Mammary epithelial cell (primary cell): ENCODE measurements at regions of chr12 and their contacts with region 1.

Region 1: DNA sequence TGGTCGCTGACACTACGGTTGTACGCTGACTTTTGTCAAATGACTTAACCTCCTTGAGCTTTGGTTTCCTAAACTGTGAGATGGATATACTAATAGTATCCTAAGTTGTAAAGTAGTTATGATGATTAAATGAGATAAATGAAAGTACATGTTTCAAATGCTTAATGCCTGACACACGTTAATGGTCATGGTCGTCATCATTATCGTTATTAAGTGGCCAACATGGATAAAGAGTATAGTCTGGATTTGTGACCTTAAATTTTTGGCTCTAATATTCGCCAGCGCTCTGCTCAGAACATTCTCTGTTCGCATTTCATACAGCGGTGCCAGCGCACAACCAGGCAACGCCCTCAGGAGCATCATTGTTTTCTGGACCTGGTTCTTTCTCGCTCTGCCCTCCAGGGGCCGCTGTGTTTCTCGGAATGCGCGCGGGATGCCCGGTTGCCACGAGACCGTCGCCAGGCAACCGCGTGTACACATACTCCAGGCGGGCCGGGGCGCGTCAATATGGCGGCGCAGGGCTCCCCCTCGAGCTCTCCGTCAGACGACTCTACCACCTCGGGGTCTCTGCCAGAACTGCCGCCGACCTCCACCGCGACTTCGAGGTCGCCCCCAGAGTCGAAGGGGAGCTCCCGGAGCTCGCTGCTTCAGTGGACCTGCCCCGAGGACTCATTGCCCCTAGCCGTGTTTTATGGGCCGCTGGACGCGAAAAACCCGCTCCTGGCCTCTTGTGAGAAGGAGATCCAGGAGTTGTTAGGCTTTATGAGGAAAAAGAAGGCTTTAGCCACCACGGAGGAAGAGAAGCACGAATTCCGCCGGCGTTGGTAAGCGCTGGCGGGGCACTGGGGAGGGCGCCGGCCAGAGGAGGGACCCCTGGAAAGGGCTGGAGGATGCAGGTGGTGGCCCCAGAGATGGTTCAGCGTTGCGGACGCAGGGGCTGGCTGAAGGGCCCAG is at the start of gene CFAP54:
- DNase-seq: peak; percentile 92
- H3K4me3 ChIP-seq: peak within 1 kb of the TSS; percentile 59 to 72 (median 63)
- H3K27ac ChIP-seq: peak within 1 kb of the TSS; percentile 91
- H3K4me1 ChIP-seq: peaks cover 38% of the 10 kb centered on the region
- H3K27me3 ChIP-seq: no peaks in the 10 kb centered on the region
- CTCF ChIP-seq: peak; percentile 73 to 89
- total RNA-seq, gene CFAP54: 1.5 to 1.6 TPM

Region 2: DNA sequence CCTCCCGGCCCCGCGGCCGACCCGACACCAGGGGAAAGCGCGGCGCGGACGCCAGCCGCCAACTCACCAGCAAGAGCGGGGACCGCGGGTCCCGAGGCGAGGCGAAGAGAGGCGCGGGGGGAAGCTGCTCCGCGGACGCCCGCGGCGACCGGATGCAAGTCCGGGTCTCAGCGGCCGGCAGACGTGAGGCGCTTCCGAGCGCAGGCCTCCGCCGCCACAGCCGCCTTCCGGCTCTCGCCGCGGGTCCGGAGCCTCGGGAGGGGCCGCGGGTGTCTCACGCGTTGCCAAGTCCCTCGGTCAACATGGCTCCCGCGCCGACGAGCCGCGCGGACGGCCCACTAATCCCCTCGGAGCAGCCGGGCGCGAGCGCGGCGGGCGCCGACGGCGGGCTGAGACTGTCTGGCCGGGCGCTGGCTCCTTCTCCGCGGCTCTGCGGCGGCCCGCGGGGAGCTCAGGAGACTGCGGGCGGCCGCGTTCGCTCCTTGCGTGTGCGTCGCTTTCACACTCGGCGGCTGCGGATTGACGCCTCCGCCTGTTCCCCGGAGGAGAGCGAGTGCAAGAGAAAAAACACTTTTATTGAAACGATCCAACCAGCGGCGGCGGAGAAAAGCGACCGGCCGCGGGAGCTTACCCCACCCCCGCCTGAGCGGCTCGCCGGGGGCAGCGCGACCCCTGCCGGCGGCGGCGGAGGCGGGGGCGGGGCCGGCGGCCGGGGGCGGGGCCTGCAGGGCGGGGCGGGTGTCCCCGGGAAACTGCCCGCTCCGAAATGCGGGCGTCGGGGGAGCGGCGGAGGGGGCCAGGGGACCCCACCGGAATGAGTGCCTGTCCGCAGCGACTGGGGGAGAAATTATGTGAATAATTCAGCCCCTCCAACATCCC is 89.2 kb before region 1 on chr12 and contains the start of gene CDK17:
- CTCF ChIA-PET with region 1: interaction called, 6 read pairs
- dilution Hi-C with region 1: loop called (anchors 5 kb)
- in situ Hi-C with region 1: loop called in 1 of 2 experiments (anchors 10 kb)
- intact Hi-C with region 1: loop called (anchors 1 kb)
- DNase-seq: peak; percentile 80
- H3K4me3 ChIP-seq: peak within 1 kb of the TSS; percentile 66 to 83 (median 74)
- H3K27ac ChIP-seq: peak within 1 kb of the TSS; percentile 88
- H3K4me1 ChIP-seq: peaks cover 9% of the 10 kb centered on the region
- H3K27me3 ChIP-seq: no peaks in the 10 kb centered on the region
- CTCF ChIP-seq: peak in 1 of 2 donors; percentile 44
- total RNA-seq, gene CDK17: 42.5 to 64.2 TPM

Region 3: GRCh38 chr12:96416033-96416801 is 73.2 kb before region 1 on chr12:
- CTCF ChIA-PET with region 1: no interaction called
- dilution Hi-C with region 1: no loop called
- in situ Hi-C with region 1: loop called in 1 of 2 experiments (anchors 10 kb)
- intact Hi-C with region 1: loop called (anchors 1 kb)
- DNase-seq: peak; percentile 95
- H3K4me3 ChIP-seq: no peak overlapping the region
- H3K27ac ChIP-seq: peak overlapping the region; percentile 73
- H3K4me1 ChIP-seq: peaks cover 26% of the 10 kb centered on the region
- H3K27me3 ChIP-seq: no peaks in the 10 kb centered on the region
- CTCF ChIP-seq: no peak

Region 4: DNA sequence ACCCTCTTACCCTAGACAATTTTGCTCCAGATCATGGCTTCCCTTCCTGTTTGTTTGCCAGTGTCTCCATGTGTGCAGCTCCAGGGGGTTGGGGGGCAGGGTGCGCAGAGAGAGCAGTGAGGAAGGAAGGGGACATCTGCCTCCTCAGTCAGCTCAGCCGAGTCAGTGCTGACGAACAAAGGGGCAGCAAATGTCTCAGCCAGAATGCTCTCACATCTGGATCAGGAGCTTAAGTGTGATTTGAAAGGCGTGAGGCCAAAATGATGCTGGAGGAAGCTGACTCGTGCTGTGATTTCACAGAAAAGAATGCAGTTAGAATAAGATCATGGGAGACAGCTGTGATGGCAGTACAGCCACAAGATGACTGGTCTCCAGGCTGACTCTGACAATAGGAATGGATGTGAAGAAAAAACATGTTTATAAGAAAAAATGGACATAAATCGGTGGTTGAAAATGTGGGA is 62.1 kb before region 1 on chr12:
- CTCF ChIA-PET with region 1: interaction called, 3 read pairs
- dilution Hi-C with region 1: no loop called
- in situ Hi-C with region 1: loop called in 1 of 2 experiments (anchors 10 kb)
- intact Hi-C with region 1: loop called (anchors 1 kb)
- DNase-seq: peak; percentile 99
- H3K4me3 ChIP-seq: peak overlapping the region in 2 of 3 experiments; percentile 16 to 43
- H3K27ac ChIP-seq: peak overlapping the region; percentile 99
- H3K4me1 ChIP-seq: peaks cover 43% of the 10 kb centered on the region
- H3K27me3 ChIP-seq: no peaks in the 10 kb centered on the region
- CTCF ChIP-seq: no peak

Region 5: DNA sequence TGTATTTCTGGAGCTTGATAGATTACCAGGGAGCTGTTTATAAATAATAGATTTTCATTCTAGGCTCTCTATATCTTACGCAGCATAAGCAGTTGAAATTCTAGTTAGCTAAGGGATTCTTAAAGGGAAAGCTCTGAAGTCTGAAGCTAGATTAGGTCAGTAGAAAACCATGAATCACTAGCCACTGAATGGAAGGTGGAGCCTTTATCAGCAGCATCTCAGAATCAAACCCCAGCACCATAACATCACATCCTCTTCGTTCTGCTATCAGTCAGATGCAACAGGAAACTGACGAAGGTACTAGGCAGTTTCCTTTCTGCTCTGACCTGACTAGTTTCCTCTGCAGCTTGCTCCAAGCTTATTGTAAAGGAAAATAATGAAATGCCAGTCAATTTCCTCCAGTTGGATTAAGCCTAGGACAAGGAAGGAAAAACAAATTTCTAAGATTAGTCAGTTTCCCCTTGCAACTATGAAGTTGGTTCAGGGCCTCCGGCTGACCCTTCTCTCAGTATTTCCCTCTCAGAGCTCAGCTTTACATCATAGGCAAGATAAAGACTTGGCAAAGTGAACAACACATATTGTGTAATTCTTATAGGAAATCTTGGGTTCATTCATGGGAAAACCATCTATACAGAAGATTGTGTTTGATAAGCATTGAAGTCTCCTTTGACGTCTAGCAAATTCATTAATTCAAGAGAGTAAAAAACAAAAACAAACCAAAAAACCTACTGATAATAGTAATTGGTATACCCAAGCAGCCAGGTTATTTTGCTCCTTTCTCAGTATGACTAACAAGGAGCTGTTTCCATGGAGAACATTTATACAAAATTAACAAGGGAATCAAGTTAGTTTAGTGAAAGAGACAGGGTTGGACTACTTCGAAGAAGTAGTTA is 43.4 kb before region 1 on chr12:
- CTCF ChIA-PET with region 1: interaction called, 3 read pairs
- dilution Hi-C with region 1: no loop called
- in situ Hi-C with region 1: no loop called
- intact Hi-C with region 1: loop called (anchors 2 kb)
- DNase-seq: peak; percentile 98
- H3K4me3 ChIP-seq: no peak overlapping the region
- H3K27ac ChIP-seq: peak overlapping the region; percentile 99
- H3K4me1 ChIP-seq: peaks cover 33% of the 10 kb centered on the region
- H3K27me3 ChIP-seq: no peaks in the 10 kb centered on the region
- CTCF ChIP-seq: no peak

Region 6: DNA sequence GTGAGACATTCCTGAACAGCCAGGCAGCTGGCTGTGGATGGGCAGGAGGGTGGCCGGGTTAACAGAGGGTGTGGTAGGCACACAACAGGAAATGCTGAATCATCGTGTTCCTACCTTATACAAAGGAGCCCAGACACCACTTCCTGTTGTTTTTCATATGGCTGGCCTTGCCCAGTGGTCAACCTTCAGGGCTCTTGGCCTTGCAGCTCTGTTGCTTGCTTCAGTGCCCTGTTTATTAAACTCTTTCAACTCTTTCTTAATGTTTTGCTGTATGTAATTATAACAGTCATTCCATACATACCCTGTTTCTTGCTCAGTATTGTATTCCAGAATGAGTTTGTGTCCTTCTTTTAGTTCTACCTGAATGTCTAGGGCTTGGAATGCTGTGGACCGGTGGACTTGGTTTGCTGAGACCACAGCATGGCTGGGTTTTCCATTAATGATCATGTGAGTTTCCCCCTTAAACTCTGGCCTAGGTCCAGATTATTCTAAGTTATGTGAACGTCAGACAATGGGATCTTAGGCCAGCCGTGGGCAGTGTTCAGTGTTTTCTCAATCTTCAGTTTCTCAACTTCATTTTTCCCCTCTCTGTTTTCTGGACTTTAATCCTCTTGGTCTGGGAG is 11.9 kb after region 1 on chr12:
- CTCF ChIA-PET with region 1: no interaction called
- dilution Hi-C with region 1: no loop called
- in situ Hi-C with region 1: no loop called
- intact Hi-C with region 1: loop called (anchors 1 kb)
- DNase-seq: peak; percentile 88
- H3K4me3 ChIP-seq: no peak overlapping the region
- H3K27ac ChIP-seq: peak overlapping the region; percentile 93
- H3K4me1 ChIP-seq: peaks cover 31% of the 10 kb centered on the region
- H3K27me3 ChIP-seq: no peaks in the 10 kb centered on the region
- CTCF ChIP-seq: no peak